ENCODE measurements at regions of chr10 and their contacts with region 1.

Region 1: GRCh38 chr10:113385021-113385999 is 167.5 kb upstream of the HABP2 start:
- DNase-seq: peak; percentile 86
- H3K4me3 ChIP-seq: no peak overlapping the region
- H3K27ac ChIP-seq: peak overlapping the region in 1 of 2 donors; percentile 2
- H3K4me1 ChIP-seq: no peaks in the 10 kb centered on the region
- H3K27me3 ChIP-seq: no peaks in the 10 kb centered on the region
- CTCF ChIP-seq: peak; percentile 45 to 83 (median 76)
- POLR2A ChIP-seq: no peak

Region 2: DNA sequence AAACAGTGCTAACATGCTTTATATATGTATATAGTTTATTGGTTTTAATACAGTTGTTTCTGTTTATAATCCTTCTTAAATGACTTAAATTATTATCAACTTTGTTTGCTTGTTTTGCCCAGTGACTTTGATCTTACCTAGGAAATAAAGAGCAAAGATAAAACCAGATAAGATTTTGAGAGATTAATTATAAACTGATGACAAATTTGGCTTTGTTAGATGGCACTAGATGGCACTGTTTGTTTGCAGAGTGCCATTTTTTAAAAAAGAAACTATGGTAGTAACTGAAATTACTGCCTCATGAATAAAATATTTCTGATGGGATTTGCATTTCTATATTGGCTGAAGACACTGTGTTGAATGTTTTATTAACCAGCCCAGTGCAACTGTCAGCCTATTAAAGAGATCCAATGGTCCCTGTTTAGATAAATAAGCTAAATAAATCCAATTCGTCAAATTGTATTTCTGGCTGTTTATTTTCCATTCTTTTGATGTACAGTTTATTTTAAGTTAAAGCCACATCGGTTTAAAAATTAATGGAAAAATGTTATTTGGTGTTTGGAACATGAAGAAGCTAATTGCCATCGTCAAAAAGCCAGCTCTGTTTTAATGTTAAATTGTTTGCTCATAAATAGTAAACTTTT is 909.6 kb before region 1 on chr10:
- intact Hi-C with region 1: loop called (anchors 5 kb)
- DNase-seq: no peak
- H3K4me3 ChIP-seq: no peak overlapping the region
- H3K27ac ChIP-seq: no peak overlapping the region
- H3K4me1 ChIP-seq: no peaks in the 10 kb centered on the region
- H3K27me3 ChIP-seq: no peaks in the 10 kb centered on the region
- CTCF ChIP-seq: peak in 3 of 4 experiments; percentile 30 to 64 (median 52)
- POLR2A ChIP-seq: no peak

Region 3: GRCh38 chr10:112716924-112717413 is 668.3 kb before region 1 on chr10:
- intact Hi-C with region 1: loop called (anchors 10 kb)
- DNase-seq: no peak
- H3K4me3 ChIP-seq: no peak overlapping the region
- H3K27ac ChIP-seq: no peak overlapping the region
- H3K4me1 ChIP-seq: no peaks in the 10 kb centered on the region
- H3K27me3 ChIP-seq: no peaks in the 10 kb centered on the region
- CTCF ChIP-seq: no peak
- POLR2A ChIP-seq: no peak

Region 4: GRCh38 chr10:113126229-113127201 is 258.8 kb before region 1 on chr10:
- intact Hi-C with region 1: loop called (anchors 2 kb)
- DNase-seq: peak; percentile 56
- H3K4me3 ChIP-seq: peak overlapping the region; percentile 19 to 23
- H3K27ac ChIP-seq: no peak overlapping the region
- H3K4me1 ChIP-seq: no peaks in the 10 kb centered on the region
- H3K27me3 ChIP-seq: no peaks in the 10 kb centered on the region
- CTCF ChIP-seq: peak; percentile 67 to 87 (median 78)
- POLR2A ChIP-seq: no peak

Region 5: GRCh38 chr10:113521123-113521795 is 135.9 kb after region 1 on chr10:
- intact Hi-C with region 1: loop called (anchors 5 kb)
- DNase-seq: peak; percentile 75
- H3K4me3 ChIP-seq: no peak overlapping the region
- H3K27ac ChIP-seq: no peak overlapping the region
- H3K4me1 ChIP-seq: peaks cover 2% of the 10 kb centered on the region
- H3K27me3 ChIP-seq: no peaks in the 10 kb centered on the region
- CTCF ChIP-seq: peak; percentile 91 to 98 (median 96)
- POLR2A ChIP-seq: no peak

Measured in prostate gland (tissue), 2 donors.